ENCODE measurements at regions of chr4 and their contacts with region 1.

Region 1: GRCh38 chr4:120156120-120156718 is 89.6 kb upstream of the MAD2L1 start:
- DNase-seq: peak; percentile 80
- ATAC-seq: peak; percentile 78; the same call in 1 of the 2 replicates
- H3K4me3 ChIP-seq: no peak overlapping the region
- H3K27ac ChIP-seq: no peak overlapping the region
- H3K4me1 ChIP-seq: no peaks in the 10 kb centered on the region
- H3K27me3 ChIP-seq: 0 out of 2 replicates have a peak, but pooled peaks cover 2% of the 10 kb centered on the region
- CTCF ChIP-seq: peak; percentile 67
- POLR2A ChIP-seq: no peak
- RAD21 ChIP-seq: peak; percentile 60

Region 2: GRCh38 chr4:119490335-119490734 is 665.9 kb before region 1 on chr4:
- CTCF ChIA-PET with region 1: no interaction called
- POLR2A ChIA-PET with region 1: no interaction called
- dilution Hi-C with region 1: no loop called
- in situ Hi-C with region 1: no loop called
- intact Hi-C with region 1: no loop called
- DNase-seq: peak; percentile 69
- ATAC-seq: peak; percentile 45
- H3K4me3 ChIP-seq: no peak overlapping the region
- H3K27ac ChIP-seq: no peak overlapping the region
- H3K4me1 ChIP-seq: no peaks in the 10 kb centered on the region
- H3K27me3 ChIP-seq: no peaks in the 10 kb centered on the region
- CTCF ChIP-seq: peak; percentile 43
- POLR2A ChIP-seq: no peak; the same call in 1 of the 2 replicates
- RAD21 ChIP-seq: peak; percentile 38

Region 3: DNA sequence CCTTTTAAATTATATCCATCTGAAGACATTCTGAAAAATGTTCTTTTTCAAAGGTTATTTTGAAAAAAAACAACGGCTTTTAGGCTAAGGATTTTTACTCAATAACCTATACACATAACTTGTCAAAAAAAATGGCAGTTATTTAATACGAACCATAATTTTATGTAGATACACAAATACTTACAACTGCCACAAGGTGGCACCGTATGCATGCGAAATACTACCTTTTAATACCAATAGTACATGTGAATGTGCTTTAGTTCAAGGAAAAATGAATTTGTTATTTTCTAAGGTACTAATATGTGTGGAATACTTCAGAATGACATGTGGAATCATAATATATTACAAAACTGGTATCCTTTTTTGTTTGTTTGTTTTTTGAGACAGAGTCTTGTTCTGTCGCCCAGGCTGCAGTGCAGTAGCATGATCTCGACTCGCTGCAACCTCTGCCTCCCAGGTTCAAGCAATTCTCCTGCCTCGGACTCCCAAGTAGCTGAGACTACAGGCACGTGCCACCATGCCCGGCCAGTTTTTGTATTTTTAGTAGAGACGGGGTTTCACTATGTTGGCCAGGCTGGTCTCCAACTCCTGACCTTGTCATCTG is 84.9 kb before region 1 on chr4:
- CTCF ChIA-PET with region 1: no interaction called
- POLR2A ChIA-PET with region 1: no interaction called
- dilution Hi-C with region 1: no loop called
- in situ Hi-C with region 1: no loop called
- intact Hi-C with region 1: loop called (anchors 5 kb)
- DNase-seq: peak; percentile 80
- ATAC-seq: no peak; the same call in 1 of the 2 replicates
- H3K4me3 ChIP-seq: no peak overlapping the region
- H3K27ac ChIP-seq: no peak overlapping the region
- H3K4me1 ChIP-seq: peaks cover 7% of the 10 kb centered on the region
- H3K27me3 ChIP-seq: no peaks in the 10 kb centered on the region
- CTCF ChIP-seq: peak; percentile 75
- POLR2A ChIP-seq: no peak
- RAD21 ChIP-seq: peak; percentile 75

Region 4: GRCh38 chr4:120922381-120923206 is 766.4 kb after region 1 on chr4 and contains the start of gene PRDM5:
- CTCF ChIA-PET with region 1: no interaction called
- POLR2A ChIA-PET with region 1: no interaction called
- dilution Hi-C with region 1: no loop called
- in situ Hi-C with region 1: no loop called
- intact Hi-C with region 1: loop called (anchors 5 kb)
- DNase-seq: peak; percentile 40
- ATAC-seq: peak; percentile 75
- H3K4me3 ChIP-seq: peak within 1 kb of the TSS; percentile 49
- H3K27ac ChIP-seq: peak within 1 kb of the TSS; percentile 51
- H3K4me1 ChIP-seq: peaks cover 2% of the 10 kb centered on the region; the same call in 1 of the 2 replicates
- H3K27me3 ChIP-seq: no peaks in the 10 kb centered on the region
- CTCF ChIP-seq: no peak
- POLR2A ChIP-seq: no peak; the same call in 1 of the 2 replicates
- RAD21 ChIP-seq: no peak
- total RNA-seq, gene PRDM5: 10.8 and 12.8 TPM in 2 replicates

Region 5: GRCh38 chr4:121050300-121050699 is 894.1 kb after region 1 on chr4:
- CTCF ChIA-PET with region 1: no interaction called
- POLR2A ChIA-PET with region 1: no interaction called
- dilution Hi-C with region 1: no loop called
- in situ Hi-C with region 1: no loop called
- intact Hi-C with region 1: loop called (anchors 5 kb)
- DNase-seq: no peak
- ATAC-seq: no peak
- H3K4me3 ChIP-seq: no peak overlapping the region
- H3K27ac ChIP-seq: no peak overlapping the region
- H3K4me1 ChIP-seq: no peaks in the 10 kb centered on the region
- H3K27me3 ChIP-seq: no peaks in the 10 kb centered on the region
- CTCF ChIP-seq: peak; percentile 29
- POLR2A ChIP-seq: no peak
- RAD21 ChIP-seq: no peak

Region 6: DNA sequence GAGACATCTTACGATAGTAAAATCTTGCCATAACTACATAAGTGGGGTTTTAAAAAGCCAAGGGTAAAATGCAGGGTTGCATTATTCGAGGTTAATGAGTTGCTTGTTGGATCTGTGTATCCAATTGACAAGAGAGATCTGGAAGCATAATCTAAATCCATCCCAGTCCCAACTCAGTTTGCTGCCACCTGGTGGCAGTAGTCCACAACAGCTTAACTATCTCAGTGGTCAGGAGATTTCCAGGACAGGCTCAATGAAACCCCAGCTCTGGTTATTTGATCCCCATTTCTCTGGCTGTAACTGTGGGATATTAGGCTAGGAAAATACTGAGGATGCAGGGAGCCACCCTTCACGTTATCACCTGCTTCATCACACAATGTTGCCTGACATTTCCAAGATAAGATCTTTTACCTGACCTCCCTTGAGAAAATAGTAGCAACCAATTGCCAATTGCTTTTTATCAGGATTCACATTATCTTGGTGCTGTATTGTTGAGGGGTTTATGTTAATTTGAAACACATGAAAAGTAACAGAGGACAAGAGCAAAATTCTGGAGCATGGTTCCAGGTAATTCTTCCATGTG is 1096.1 kb after region 1 on chr4:
- CTCF ChIA-PET with region 1: no interaction called
- POLR2A ChIA-PET with region 1: no interaction called
- dilution Hi-C with region 1: no loop called
- in situ Hi-C with region 1: no loop called
- intact Hi-C with region 1: loop called (anchors 5 kb)
- DNase-seq: peak; percentile 65
- ATAC-seq: peak; percentile 88
- H3K4me3 ChIP-seq: no peak overlapping the region
- H3K27ac ChIP-seq: no peak overlapping the region
- H3K4me1 ChIP-seq: no peaks in the 10 kb centered on the region
- H3K27me3 ChIP-seq: no peaks in the 10 kb centered on the region
- CTCF ChIP-seq: peak; percentile 78
- POLR2A ChIP-seq: no peak
- RAD21 ChIP-seq: peak; percentile 63

Measured in IMR-90 (cell line).